Breast epithelium (tissue), 4 donors: ENCODE measurements at regions of chr15 and their contacts with region 1.

Region 1: GRCh38 chr15:83769416-83770004 is 115.6 kb downstream of the ADAMTSL3 start:
- DNase-seq: no peak
- H3K4me3 ChIP-seq: no peak overlapping the region
- H3K27ac ChIP-seq: no peak overlapping the region
- H3K4me1 ChIP-seq: no peaks in the 10 kb centered on the region
- H3K27me3 ChIP-seq: no peaks in the 10 kb centered on the region
- CTCF ChIP-seq: no peak
- POLR2A ChIP-seq: no peak

Region 2: GRCh38 chr15:83665480-83665879 is 104.0 kb before region 1 on chr15:
- intact Hi-C with region 1: loop called (anchors 5 kb)
- DNase-seq: no peak
- H3K4me3 ChIP-seq: no peak overlapping the region
- H3K27ac ChIP-seq: no peak overlapping the region
- H3K4me1 ChIP-seq: no peaks in the 10 kb centered on the region
- H3K27me3 ChIP-seq: no peaks in the 10 kb centered on the region
- CTCF ChIP-seq: no peak
- POLR2A ChIP-seq: no peak

Region 3: GRCh38 chr15:83747050-83747717 is 22.3 kb before region 1 on chr15:
- intact Hi-C with region 1: no loop called
- DNase-seq: no peak
- H3K4me3 ChIP-seq: peak overlapping the region in 1 of 3 donors; percentile 38
- H3K27ac ChIP-seq: peak overlapping the region; percentile 0 to 59
- H3K4me1 ChIP-seq: no peaks in the 10 kb centered on the region
- H3K27me3 ChIP-seq: no peaks in the 10 kb centered on the region
- CTCF ChIP-seq: peak in 1 of 3 donors; percentile 16
- POLR2A ChIP-seq: no peak

Region 4: DNA sequence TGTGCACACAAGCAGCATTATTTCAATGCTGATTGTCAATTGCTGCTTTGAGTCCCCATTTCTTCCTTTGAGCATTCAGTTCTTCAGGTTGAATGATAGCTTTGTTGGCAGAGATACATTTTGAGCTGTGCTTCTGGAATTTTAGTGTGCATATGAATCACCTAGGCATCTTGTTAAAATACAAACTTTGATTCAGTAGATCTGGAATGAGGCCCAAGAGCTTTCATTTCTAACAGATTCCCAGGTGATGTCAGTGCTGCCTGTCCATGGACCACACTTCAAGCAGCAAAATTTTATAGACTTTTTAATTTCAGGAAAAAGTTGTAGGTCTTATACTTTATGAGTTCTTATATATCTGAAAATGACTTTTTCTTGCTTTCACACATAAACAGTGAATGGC is 15.5 kb after region 1 on chr15:
- intact Hi-C with region 1: no loop called
- DNase-seq: no peak
- H3K4me3 ChIP-seq: no peak overlapping the region
- H3K27ac ChIP-seq: no peak overlapping the region
- H3K4me1 ChIP-seq: no peaks in the 10 kb centered on the region
- H3K27me3 ChIP-seq: no peaks in the 10 kb centered on the region
- CTCF ChIP-seq: no peak
- POLR2A ChIP-seq: no peak